ENCODE measurements at regions of chr17 and their contacts with region 1.

Region 1: GRCh38 chr17:29931231-29931932 is 1.4 kb upstream of the SSH2 start:
- DNase-seq: peak; percentile 44
- ATAC-seq: peak; percentile 77
- H3K4me3 Mint-ChIP-seq: no peak overlapping the region
- H3K27ac Mint-ChIP-seq: no peak overlapping the region
- H3K4me1 Mint-ChIP-seq: peaks cover 33% of the 10 kb centered on the region
- H3K27me3 Mint-ChIP-seq: no peaks in the 10 kb centered on the region
- CTCF ChIP-seq: no peak

Region 2: DNA sequence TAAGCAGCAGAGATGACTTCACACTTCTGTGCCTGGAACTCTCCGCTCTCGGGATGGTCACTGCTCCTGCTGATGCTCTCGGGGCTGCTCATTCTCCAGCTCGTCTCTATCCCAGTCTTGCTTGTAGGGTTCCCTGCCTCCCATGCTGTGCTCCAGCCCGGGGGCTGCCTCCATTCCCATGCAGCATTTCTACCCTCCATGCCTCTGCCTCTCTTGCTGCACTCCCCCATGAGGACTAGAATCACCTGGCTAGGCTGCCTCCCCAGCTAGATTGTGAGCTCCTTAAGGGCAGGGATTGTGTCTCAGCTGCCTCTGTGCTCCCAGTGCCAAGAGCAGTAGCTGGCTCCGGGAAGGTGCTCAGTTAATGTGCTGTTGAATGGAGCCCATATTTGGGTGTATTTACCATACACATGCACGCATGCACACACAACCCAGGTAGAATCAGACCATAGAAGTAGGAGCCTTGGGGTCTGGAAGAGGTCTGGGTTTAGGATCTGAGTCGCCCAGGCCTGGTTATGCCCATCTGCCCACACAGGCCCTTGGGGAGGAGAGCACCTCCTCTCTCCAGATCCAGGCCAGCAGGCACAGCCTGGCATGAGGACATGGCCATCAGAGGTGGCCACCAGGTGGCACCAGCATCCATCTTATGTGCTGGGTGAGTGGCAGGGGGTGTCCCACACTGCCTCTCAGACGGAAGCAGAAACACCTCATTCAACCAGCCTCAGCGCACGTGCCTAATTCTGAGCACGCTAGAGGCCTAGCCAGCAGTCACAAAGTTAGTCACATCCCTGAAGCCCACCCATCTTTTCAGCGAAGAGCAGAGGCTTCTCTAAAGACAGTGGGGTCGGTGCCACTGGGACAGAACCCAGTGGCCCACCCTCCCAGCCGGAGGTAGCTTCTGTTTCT is 351.3 kb before region 1 on chr17:
- CTCF ChIA-PET with region 1: interaction called, 9 read pairs
- POLR2A ChIA-PET with region 1: no interaction called
- intact Hi-C with region 1: loop called (anchors 1 kb)
- DNase-seq: peak; percentile 82
- ATAC-seq: peak; percentile 98
- H3K4me3 Mint-ChIP-seq: no peak overlapping the region
- H3K27ac Mint-ChIP-seq: peak overlapping the region; percentile 71
- H3K4me1 Mint-ChIP-seq: peaks cover 27% of the 10 kb centered on the region
- H3K27me3 Mint-ChIP-seq: no peaks in the 10 kb centered on the region
- CTCF ChIP-seq: no peak

Region 3: DNA sequence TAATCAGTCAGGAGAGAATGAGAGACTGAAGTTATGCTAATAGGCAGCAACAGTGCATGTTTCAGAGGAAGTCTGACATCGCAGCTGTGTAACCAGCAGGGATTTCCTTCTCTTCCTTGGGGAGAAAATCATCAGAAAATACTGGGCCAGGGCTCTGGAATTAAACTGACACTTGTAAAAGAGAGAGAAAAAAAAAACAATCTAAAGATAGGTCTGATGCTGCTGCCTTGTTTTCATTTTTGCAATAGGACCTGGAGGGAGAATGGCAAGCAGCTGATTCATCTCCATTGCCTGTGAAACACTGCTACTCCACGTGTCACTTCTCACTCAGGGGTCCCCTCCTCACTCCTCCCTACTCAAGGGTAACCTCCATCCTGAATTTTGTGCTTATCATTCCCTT is 291.0 kb before region 1 on chr17:
- CTCF ChIA-PET with region 1: interaction called, 68 read pairs
- POLR2A ChIA-PET with region 1: interaction called, 26 read pairs
- intact Hi-C with region 1: loop called (anchors 1 kb)
- DNase-seq: no peak
- ATAC-seq: no peak
- H3K4me3 Mint-ChIP-seq: no peak overlapping the region
- H3K27ac Mint-ChIP-seq: peak overlapping the region; percentile 89
- H3K4me1 Mint-ChIP-seq: peaks cover 32% of the 10 kb centered on the region
- H3K27me3 Mint-ChIP-seq: no peaks in the 10 kb centered on the region
- CTCF ChIP-seq: no peak

Region 4: DNA sequence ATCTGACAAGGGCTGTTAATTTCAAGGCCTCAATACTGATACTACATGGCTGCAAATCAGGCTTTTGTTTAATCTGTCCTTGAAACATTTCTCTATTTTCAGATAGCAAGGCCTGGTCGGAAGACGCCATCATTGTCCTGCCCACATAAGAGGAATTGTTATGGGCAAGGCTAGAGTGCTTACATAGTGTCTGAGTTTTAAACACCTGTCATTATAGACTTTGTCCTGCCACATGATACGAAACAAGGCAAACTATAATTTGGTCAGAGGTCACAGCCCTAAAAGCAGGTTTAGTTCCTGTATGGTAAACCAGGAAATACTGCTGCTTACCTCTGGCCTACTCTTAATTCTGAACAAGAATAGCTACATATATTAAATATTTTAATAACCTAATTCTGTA is 105.8 kb before region 1 on chr17:
- CTCF ChIA-PET with region 1: interaction called, 9 read pairs
- POLR2A ChIA-PET with region 1: interaction called, 12 read pairs
- intact Hi-C with region 1: no loop called
- DNase-seq: no peak
- ATAC-seq: no peak
- H3K4me3 Mint-ChIP-seq: no peak overlapping the region
- H3K27ac Mint-ChIP-seq: no peak overlapping the region
- H3K4me1 Mint-ChIP-seq: peaks cover 4% of the 10 kb centered on the region
- H3K27me3 Mint-ChIP-seq: no peaks in the 10 kb centered on the region
- CTCF ChIP-seq: no peak

Region 5: GRCh38 chr17:29918922-29919856 is 12.2 kb before region 1 on chr17:
- CTCF ChIA-PET with region 1: interaction called, 7 read pairs
- POLR2A ChIA-PET with region 1: interaction called, 6 read pairs
- intact Hi-C with region 1: loop called (anchors 1 kb)
- DNase-seq: no peak
- ATAC-seq: no peak
- H3K4me3 Mint-ChIP-seq: no peak overlapping the region
- H3K27ac Mint-ChIP-seq: peak overlapping the region; percentile 21
- H3K4me1 Mint-ChIP-seq: peaks cover 34% of the 10 kb centered on the region
- H3K27me3 Mint-ChIP-seq: no peaks in the 10 kb centered on the region
- CTCF ChIP-seq: no peak

Region 6: DNA sequence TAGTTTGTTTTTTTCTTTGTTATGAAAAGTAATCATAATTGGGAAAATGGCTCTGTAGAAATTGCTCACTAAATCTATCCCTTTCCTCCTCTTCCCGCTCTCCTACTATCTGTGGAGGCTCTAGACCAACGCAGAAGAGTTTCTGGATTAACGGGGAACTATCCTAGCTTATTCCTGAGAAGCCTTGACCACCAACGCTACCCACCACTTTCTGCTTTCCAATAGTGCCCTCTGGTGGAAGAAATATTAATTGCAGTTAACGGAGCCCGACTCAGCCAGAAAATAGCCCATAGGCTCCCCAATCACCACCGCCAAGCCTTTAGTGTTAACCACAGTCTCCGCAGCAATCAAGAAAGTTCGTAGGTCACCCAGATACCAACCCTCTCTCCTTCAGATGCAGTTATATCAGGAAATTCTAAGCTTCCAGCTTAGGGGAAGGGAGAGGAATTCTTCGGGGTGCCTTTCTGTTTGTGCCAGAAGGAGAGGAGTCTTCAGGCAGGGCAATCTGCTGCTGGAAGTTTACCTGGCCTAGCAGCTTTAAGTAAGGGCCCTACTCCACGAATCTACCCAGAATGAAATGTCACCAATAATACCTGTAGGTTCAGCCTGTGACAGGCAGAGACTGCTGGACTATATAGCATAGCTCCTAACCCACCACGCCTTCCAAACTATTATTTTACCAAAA is 162.2 kb after region 1 on chr17:
- CTCF ChIA-PET with region 1: interaction called, 6 read pairs
- POLR2A ChIA-PET with region 1: no interaction called
- intact Hi-C with region 1: loop called (anchors 1 kb)
- DNase-seq: no peak
- ATAC-seq: peak; percentile 68
- H3K4me3 Mint-ChIP-seq: no peak overlapping the region
- H3K27ac Mint-ChIP-seq: no peak overlapping the region
- H3K4me1 Mint-ChIP-seq: peaks cover 10% of the 10 kb centered on the region
- H3K27me3 Mint-ChIP-seq: peaks cover 21% of the 10 kb centered on the region
- CTCF ChIP-seq: peak; percentile 64